ENCODE measurements at regions of chr2 and their contacts with region 1.

Region 1: GRCh38 chr2:69436938-69437750 is at the start of gene NFU1:
- DNase-seq: peak; percentile 98
- total RNA-seq, gene NFU1: 35.3 to 44.0 TPM

Region 2: DNA sequence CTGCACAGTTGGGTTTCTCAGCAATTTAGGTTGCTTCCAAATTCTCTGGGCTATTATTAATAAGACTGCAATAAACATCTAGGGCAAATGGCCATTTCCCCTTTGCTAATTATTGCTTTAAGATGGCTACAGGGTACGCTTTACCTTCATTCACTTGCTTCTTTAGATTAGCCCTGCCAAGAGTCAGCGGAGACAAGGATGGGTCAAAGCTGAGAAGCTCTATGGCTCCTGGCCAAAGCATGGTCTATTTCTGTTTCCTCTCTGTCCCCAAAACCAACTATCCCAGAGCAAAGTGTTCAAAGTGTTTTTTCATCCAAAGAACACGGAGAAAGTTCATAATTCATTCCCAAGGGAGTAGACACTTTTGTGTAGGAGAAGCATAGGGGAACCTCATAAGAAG is 75.3 kb after region 1 on chr2:
- intact Hi-C with region 1: loop called in 1 of 2 experiments (anchors 2 kb)
- DNase-seq: no peak